ENCODE measurements at regions of chr9 and their contacts with region 1.

Region 1: GRCh38 chr9:16871356-16872151 is 1.1 kb upstream of the BNC2 start:
- DNase-seq: peak; percentile 88
- ATAC-seq: peak; percentile 50
- H3K4me3 ChIP-seq: peak overlapping the region; percentile 89
- H3K27ac ChIP-seq: peak overlapping the region; percentile 90
- H3K4me1 ChIP-seq: peaks cover 5% of the 10 kb centered on the region; the same call in 1 of the 2 replicates
- H3K27me3 ChIP-seq: no peaks in the 10 kb centered on the region
- CTCF ChIP-seq: no peak
- POLR2A ChIP-seq: peak; percentile 18; the same call in 1 of the 2 replicates
- RAD21 ChIP-seq: peak; percentile 1; the same call in 1 of the 2 replicates

Region 2: DNA sequence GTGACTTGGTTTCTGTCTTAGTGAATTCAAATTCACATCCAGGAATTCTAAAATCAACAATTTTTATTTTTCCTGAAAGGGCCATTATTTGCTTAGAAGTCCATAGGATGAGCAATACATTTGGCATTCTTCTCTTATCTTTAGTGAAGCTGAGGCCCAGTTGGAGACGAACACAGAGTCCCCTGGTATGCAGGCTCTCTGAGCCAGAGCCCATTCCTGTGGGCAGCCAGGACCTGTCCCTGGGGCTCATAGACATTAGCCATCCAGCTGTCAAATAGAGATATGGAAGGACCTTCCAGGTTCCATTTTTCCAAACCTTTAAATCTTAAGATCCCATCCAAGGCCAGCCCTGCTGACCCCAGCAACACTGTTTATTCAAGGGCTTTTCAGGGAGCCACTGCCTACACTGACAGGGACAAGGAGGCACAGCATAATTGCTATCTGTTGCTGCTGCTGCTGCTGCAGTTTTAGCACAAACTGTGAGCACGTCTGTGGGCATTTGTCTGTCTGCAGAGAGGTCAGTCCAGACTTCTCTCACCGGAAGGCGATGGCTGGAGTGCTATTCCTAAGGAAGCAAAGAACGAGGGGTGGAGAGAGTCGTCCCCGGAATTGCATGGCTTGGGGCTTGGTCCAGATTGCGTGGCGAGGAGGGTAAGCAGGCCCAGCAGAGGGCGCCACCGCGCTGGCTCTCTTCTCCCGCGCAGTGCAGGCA is 679.7 kb before region 1 on chr9:
- CTCF ChIA-PET with region 1: no interaction called
- POLR2A ChIA-PET with region 1: no interaction called
- dilution Hi-C with region 1: no loop called
- in situ Hi-C with region 1: no loop called
- intact Hi-C with region 1: loop called (anchors 2 kb)
- DNase-seq: peak; percentile 87
- ATAC-seq: peak; percentile 89
- H3K4me3 ChIP-seq: peak overlapping the region; percentile 1; the same call in 1 of the 2 replicates
- H3K27ac ChIP-seq: peak overlapping the region; percentile 92
- H3K4me1 ChIP-seq: peaks cover 28% of the 10 kb centered on the region
- H3K27me3 ChIP-seq: no peaks in the 10 kb centered on the region
- CTCF ChIP-seq: peak; percentile 91
- POLR2A ChIP-seq: no peak
- RAD21 ChIP-seq: peak; percentile 95

Region 3: GRCh38 chr9:16515879-16516301 is 355.7 kb before region 1 on chr9:
- CTCF ChIA-PET with region 1: no interaction called
- POLR2A ChIA-PET with region 1: no interaction called
- dilution Hi-C with region 1: no loop called
- in situ Hi-C with region 1: no loop called
- intact Hi-C with region 1: loop called (anchors 5 kb)
- DNase-seq: peak; percentile 84
- ATAC-seq: peak; percentile 81
- H3K4me3 ChIP-seq: no peak overlapping the region
- H3K27ac ChIP-seq: peak overlapping the region; percentile 100
- H3K4me1 ChIP-seq: peaks cover 18% of the 10 kb centered on the region
- H3K27me3 ChIP-seq: no peaks in the 10 kb centered on the region
- CTCF ChIP-seq: no peak
- POLR2A ChIP-seq: no peak
- RAD21 ChIP-seq: no peak

Region 4: DNA sequence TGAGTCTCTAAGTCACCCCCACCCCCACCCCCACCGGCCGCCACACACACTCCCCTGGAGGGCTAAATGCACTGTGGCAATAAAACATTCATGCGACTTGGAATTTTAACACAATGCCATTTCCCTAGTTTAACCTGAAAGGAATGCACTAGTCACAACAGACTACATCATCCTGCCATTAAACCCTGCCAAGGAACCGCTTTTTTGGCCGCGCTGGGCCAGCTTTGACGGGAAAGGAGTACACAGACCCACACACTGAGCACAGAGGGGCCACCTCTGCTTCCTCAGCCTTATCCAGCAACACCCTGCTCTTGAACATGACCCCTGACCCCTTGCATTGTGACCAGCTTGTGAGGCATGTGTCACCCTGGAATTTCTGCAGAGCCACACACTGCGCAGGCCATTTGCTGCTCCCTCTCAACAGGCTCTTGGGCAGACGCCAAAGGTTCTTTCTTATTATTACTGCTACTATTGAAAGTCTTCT is 166.4 kb before region 1 on chr9:
- CTCF ChIA-PET with region 1: interaction called, 7 read pairs
- POLR2A ChIA-PET with region 1: no interaction called
- dilution Hi-C with region 1: no loop called
- in situ Hi-C with region 1: no loop called
- intact Hi-C with region 1: loop called (anchors 1 kb)
- DNase-seq: peak; percentile 97
- ATAC-seq: peak; percentile 80
- H3K4me3 ChIP-seq: peak overlapping the region; percentile 42
- H3K27ac ChIP-seq: peak overlapping the region; percentile 99
- H3K4me1 ChIP-seq: peaks cover 22% of the 10 kb centered on the region
- H3K27me3 ChIP-seq: no peaks in the 10 kb centered on the region
- CTCF ChIP-seq: no peak
- POLR2A ChIP-seq: no peak
- RAD21 ChIP-seq: no peak; the same call in 1 of the 2 replicates

Region 5: GRCh38 chr9:16828340-16829281 is 42.9 kb before region 1 on chr9:
- CTCF ChIA-PET with region 1: no interaction called
- POLR2A ChIA-PET with region 1: no interaction called
- dilution Hi-C with region 1: no loop called
- in situ Hi-C with region 1: no loop called
- intact Hi-C with region 1: loop called (anchors 1 kb)
- DNase-seq: peak; percentile 78
- ATAC-seq: peak; percentile 21
- H3K4me3 ChIP-seq: peak overlapping the region; percentile 22; the same call in 1 of the 2 replicates
- H3K27ac ChIP-seq: peak overlapping the region; percentile 93
- H3K4me1 ChIP-seq: peaks cover 22% of the 10 kb centered on the region
- H3K27me3 ChIP-seq: no peaks in the 10 kb centered on the region
- CTCF ChIP-seq: no peak
- POLR2A ChIP-seq: no peak
- RAD21 ChIP-seq: no peak

Region 6: GRCh38 chr9:17005056-17005823 is 133.7 kb after region 1 on chr9:
- CTCF ChIA-PET with region 1: no interaction called
- POLR2A ChIA-PET with region 1: no interaction called
- dilution Hi-C with region 1: no loop called
- in situ Hi-C with region 1: no loop called
- intact Hi-C with region 1: loop called (anchors 5 kb)
- DNase-seq: peak; percentile 81
- ATAC-seq: peak; percentile 98
- H3K4me3 ChIP-seq: no peak overlapping the region; the same call in 1 of the 2 replicates
- H3K27ac ChIP-seq: peak overlapping the region; percentile 26; the same call in 1 of the 2 replicates
- H3K4me1 ChIP-seq: peaks cover 3% of the 10 kb centered on the region
- H3K27me3 ChIP-seq: no peaks in the 10 kb centered on the region
- CTCF ChIP-seq: no peak
- POLR2A ChIP-seq: no peak
- RAD21 ChIP-seq: no peak

Region 7: GRCh38 chr9:17462869-17463464 is 591.4 kb after region 1 on chr9:
- CTCF ChIA-PET with region 1: no interaction called
- POLR2A ChIA-PET with region 1: no interaction called
- dilution Hi-C with region 1: no loop called
- in situ Hi-C with region 1: no loop called
- intact Hi-C with region 1: loop called (anchors 10 kb)
- DNase-seq: peak; percentile 78
- ATAC-seq: peak; percentile 82
- H3K4me3 ChIP-seq: no peak overlapping the region
- H3K27ac ChIP-seq: no peak overlapping the region
- H3K4me1 ChIP-seq: no peaks in the 10 kb centered on the region
- H3K27me3 ChIP-seq: no peaks in the 10 kb centered on the region
- CTCF ChIP-seq: peak; percentile 83
- POLR2A ChIP-seq: no peak
- RAD21 ChIP-seq: peak; percentile 87

Measured in IMR-90 (cell line).